Activated CD8-positive, alpha-beta T cell treated with anti-CD3 and anti-CD28 coated beads for 36 hours (primary cell): ENCODE measurements at regions of chr20 and their contacts with region 1.

Region 1: DNA sequence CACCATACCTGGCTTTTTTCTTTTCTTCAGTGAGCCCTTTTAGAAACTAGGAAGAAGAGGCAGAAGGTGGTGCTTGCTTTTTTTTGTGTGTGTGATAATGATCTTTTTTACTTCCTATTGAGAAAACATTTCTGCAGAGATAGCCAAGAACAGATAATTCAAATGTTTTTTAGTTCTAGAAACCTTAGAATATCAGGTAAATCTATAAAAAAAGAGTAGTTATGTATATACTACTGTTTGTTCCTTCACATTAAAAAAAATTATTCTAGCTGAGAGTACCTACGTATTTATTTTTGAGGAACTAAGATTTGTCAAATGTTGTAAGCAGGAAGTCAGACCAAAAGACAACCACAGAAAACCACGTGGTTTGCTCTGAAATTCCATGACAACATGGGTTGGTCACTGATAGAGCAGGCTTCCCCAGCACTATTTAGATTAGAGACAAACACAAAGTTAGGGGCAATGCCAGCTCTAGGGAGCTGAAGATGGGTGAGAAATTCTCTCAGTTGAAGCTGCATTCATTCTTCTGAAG is 12.8 kb downstream of the STK4 start:
- DNase-seq: peak; percentile 86
- ATAC-seq: peak; percentile 82
- H3K4me3 Mint-ChIP-seq: peak overlapping the region; percentile 50
- H3K27ac Mint-ChIP-seq: peak overlapping the region; percentile 96
- H3K4me1 Mint-ChIP-seq: peaks cover 83% of the 10 kb centered on the region
- H3K27me3 Mint-ChIP-seq: no peaks in the 10 kb centered on the region
- CTCF ChIP-seq: no peak

Region 2: DNA sequence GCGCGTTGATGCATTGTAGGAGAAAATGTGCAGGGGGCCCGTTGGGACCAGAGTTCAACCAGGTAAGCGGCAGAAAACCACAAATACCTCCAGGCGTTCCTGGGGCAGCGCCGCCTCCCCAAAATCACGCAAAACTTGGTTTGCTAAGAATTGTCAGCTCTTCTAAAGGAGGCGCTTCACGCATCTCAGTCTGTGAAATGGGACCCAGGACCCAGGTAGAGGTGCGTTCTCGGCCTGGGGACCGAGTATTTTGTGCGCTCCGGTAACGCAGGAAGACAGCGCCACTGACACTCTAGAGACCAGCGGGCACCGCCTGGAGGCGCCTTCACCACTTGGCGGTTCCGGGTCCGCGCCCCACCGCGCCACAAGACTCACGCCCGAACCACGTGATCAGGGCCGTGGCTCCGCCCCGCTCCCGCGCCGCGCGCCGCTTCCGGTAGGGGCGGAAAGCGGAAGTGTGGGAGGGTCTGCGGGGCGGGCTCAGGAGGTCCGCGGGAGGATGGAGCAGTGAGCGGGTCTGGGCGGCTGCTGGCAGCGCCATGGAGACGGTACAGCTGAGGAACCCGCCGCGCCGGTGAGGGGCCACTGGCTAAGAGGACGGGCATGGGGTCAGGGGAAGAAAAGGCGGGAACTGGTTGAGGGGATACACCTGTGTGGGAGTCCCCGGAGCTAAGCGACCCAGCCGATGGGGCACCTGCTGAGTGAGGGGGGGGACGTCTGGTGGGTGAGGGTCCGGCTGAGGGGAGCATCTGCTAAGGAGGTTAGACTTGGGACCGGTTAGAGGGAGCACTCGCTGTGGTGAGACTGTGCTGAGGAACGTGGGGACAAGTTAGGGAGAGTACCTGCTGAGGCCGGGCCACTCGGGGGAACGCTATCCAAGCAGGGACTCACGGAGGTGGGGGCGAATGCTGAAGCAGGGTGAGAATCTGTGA is 12.9 kb before region 1 on chr20 and contains the start of gene STK4:
- CTCF ChIA-PET with region 1: interaction called, 9 read pairs
- POLR2A ChIA-PET with region 1: interaction called, 55 read pairs
- intact Hi-C with region 1: no loop called
- DNase-seq: peak; percentile 95
- ATAC-seq: peak; percentile 74
- H3K4me3 Mint-ChIP-seq: peak within 1 kb of the TSS; percentile 100
- H3K27ac Mint-ChIP-seq: peak within 1 kb of the TSS; percentile 99
- H3K4me1 Mint-ChIP-seq: peaks cover 59% of the 10 kb centered on the region
- H3K27me3 Mint-ChIP-seq: no peaks in the 10 kb centered on the region
- CTCF ChIP-seq: no peak
- total RNA-seq, gene STK4: 154 to 165 TPM